Activated naive CD4-positive, alpha-beta T cell treated with anti-CD3 and anti-CD28 coated beads for 36 hours (primary cell): ENCODE measurements at regions of chr15 and their contacts with region 1.

Region 1: DNA sequence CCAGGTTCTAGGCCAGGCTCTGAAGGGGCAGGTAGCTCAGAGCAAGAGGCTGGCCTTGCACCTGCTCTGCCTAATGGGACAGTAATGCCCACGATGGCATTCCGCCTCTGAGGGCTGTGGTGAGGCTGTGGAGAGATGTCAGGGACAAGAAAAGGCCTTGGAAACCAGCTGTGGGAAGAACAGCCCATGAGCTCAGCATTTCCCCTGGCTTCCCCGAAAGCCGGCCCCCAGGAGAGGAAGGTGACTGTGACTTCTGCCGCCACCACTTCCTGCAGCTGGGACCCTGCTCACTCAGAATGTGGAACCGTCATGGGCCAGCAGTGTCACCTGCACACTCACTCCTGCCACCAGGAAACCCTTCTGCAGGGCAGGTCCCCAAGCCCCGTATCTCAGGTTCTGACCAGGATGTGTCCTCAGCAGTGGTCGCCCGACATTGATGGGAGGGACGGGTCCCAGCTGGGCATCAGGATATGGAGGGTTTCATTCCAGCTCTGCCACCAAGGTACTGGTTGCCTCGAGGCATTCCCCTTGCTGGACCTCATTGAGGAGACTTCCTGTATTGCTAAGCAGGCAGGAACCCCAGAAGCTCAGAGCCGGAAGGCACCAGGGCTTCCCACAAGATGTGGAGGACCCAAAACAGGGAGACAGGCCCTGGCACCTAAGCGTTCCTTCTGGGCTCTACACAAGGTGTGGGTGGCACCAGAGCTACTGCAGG is 30.7 kb downstream of the SEMA7A start:
- DNase-seq: peak; percentile 97
- H3K4me3 Mint-ChIP-seq: peak overlapping the region; percentile 53
- H3K27ac Mint-ChIP-seq: peak overlapping the region; percentile 87
- H3K4me1 Mint-ChIP-seq: peaks cover 65% of the 10 kb centered on the region
- H3K27me3 Mint-ChIP-seq: no peaks in the 10 kb centered on the region

Region 2: GRCh38 chr15:73991726-73992593 is 411.1 kb before region 1 on chr15 and contains the start of gene STOML1:
- CTCF ChIA-PET with region 1: no interaction called
- intact Hi-C with region 1: loop called (anchors 5 kb)
- DNase-seq: peak; percentile 95
- H3K4me3 Mint-ChIP-seq: peak within 1 kb of the TSS; percentile 95
- H3K27ac Mint-ChIP-seq: peak within 1 kb of the TSS; percentile 83
- H3K4me1 Mint-ChIP-seq: peaks cover 49% of the 10 kb centered on the region
- H3K27me3 Mint-ChIP-seq: no peaks in the 10 kb centered on the region
- total RNA-seq, gene STOML1: 8.7 to 9.5 TPM

Region 3: DNA sequence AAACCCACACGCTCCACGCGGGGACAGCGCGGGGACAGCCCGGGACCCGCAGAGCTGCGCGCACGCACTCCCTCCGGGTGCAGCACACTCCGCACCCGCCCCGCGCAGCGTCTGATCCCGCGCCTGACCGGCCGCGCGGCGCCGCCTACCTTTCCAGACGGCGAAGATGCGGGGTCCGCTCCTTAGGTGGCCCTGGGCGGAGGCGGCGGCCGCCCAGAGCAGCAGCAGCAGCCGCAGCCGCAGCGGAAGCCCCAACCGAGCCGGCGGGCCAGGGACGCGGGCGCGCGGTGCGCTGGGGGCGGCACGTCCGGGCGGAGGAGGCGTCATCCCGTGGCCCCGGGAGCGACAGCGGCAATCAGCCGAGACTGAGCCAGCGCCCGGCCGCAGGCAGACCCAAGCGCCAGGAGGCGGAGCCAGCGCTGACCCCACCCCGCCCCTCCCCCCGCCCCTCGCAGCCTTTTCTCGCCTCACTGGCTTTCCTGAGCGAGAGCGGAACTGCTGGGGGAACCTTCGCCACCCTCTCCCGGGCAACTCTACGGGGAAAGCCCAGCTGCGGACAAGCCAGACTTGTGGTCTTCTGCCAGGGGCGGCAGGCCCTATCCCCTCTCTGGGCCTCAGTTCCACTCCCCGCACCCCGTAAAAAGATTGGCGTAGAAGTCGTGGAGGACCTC is 30.7 kb after region 1 on chr15 and contains the start of gene SEMA7A:
- CTCF ChIA-PET with region 1: interaction called, 4 read pairs
- intact Hi-C with region 1: loop called (anchors 1 kb)
- DNase-seq: peak; percentile 87
- H3K4me3 Mint-ChIP-seq: peak within 1 kb of the TSS; percentile 90
- H3K27ac Mint-ChIP-seq: peak within 1 kb of the TSS; percentile 88
- H3K4me1 Mint-ChIP-seq: peaks cover 72% of the 10 kb centered on the region
- H3K27me3 Mint-ChIP-seq: no peaks in the 10 kb centered on the region
- total RNA-seq, gene SEMA7A: 45.7 to 46.9 TPM

Region 4: GRCh38 chr15:74438721-74439316 is 35.8 kb after region 1 on chr15:
- CTCF ChIA-PET with region 1: interaction called, 4 read pairs
- intact Hi-C with region 1: loop called (anchors 1 kb)
- DNase-seq: peak; percentile 88
- H3K4me3 Mint-ChIP-seq: no peak overlapping the region
- H3K27ac Mint-ChIP-seq: peak overlapping the region; percentile 14
- H3K4me1 Mint-ChIP-seq: peaks cover 35% of the 10 kb centered on the region
- H3K27me3 Mint-ChIP-seq: no peaks in the 10 kb centered on the region

Region 5: DNA sequence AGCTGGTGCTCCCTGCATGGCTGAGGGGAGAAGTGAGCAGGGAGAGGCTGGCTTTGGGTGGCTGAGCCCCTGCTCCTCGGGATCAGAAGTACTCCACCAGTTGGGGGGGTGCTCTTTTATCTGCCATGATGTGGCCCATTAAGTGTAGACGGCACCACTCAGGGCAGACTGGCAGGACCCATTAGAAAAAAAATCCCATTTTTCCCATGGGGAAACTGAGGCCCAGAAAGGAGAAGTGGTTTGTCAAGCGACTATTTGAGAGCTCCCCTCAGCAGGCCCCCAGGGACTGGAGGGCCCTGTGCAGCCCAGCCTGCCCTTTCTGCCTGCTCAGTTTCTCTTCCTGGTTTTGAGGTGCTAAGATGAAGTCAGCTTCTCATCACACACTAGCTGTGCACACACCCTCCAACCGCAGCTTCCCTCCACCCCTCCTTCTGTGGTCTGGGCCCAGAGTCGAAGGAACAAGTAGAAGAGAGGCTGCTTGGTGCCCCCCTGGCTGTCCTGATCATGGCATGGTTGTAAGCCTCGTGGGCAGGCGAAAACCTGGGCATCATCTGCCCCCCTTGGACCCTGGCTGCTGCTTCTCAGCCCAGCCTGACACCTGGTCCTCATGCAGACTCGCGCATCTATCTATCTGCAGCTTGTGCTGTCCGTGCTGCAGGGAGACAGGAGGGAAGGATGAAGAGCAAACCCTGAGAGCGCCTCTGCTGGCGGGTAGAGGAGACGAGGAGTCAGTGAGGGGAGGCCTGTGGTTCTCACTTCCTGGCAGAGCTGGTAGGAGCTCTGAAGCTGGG is 384.4 kb after region 1 on chr15:
- CTCF ChIA-PET with region 1: no interaction called
- intact Hi-C with region 1: loop called (anchors 2 kb)
- DNase-seq: peak; percentile 98
- H3K4me3 Mint-ChIP-seq: peak overlapping the region; percentile 93
- H3K27ac Mint-ChIP-seq: peak overlapping the region; percentile 99
- H3K4me1 Mint-ChIP-seq: peaks cover 55% of the 10 kb centered on the region
- H3K27me3 Mint-ChIP-seq: no peaks in the 10 kb centered on the region

Region 6: DNA sequence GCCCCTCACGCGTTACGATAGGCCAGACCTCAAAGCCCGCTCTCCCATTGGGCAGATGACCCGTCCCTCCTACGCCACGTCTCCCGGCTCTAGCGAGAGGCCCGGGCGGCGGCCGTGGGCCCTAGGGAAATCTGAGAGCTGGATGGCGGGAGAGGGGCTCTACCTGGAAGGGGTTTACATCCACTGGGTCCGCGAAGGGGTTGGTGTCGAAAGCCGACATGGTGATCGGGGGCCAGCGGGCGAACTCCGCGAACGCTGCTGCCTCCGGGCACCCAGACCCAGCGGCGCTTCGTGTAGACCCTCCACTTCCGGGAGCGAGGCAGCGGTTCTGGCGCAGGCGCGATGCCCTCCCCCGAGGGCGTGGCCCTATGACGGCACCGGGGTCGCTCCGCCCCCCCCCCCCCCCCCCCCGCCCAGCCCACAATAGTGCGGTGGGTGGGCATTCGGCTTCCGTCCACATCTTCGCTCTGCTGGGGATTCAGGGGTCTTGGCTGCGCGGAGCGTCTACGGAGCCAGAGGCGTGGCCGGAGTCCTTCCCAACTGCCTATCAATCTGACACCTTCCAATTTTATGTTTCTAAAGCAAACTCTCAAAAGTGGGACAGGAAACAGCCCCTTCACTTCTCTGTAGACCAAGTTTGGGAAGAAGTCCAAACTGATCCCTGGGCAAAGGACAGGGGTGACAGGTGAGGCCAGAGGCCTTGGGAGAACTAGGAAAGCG is 470.2 kb after region 1 on chr15 and contains the start of gene SCAMP2:
- CTCF ChIA-PET with region 1: no interaction called
- intact Hi-C with region 1: loop called (anchors 2 kb)
- DNase-seq: peak; percentile 92
- H3K4me3 Mint-ChIP-seq: peak within 1 kb of the TSS; percentile 98
- H3K27ac Mint-ChIP-seq: peak within 1 kb of the TSS; percentile 92
- H3K4me1 Mint-ChIP-seq: peaks cover 42% of the 10 kb centered on the region
- H3K27me3 Mint-ChIP-seq: no peaks in the 10 kb centered on the region
- total RNA-seq, gene SCAMP2: 60.6 TPM